HEK293 (cell line): ENCODE measurements at regions of chr21 and their contacts with region 1.

Region 1: GRCh38 chr21:28992526-28993292 is at the start of gene LTN1:
- H3K4me3 ChIP-seq: peak within 1 kb of the TSS; percentile 64
- H3K27ac ChIP-seq: peak within 1 kb of the TSS; percentile 64
- H3K4me1 ChIP-seq: peaks cover 2% of the 10 kb centered on the region; the same call in 1 of the 2 replicates
- CTCF ChIP-seq: no peak

Region 2: GRCh38 chr21:28871388-28872010 is 121.2 kb before region 1 on chr21:
- CTCF ChIA-PET with region 1: no interaction called
- POLR2A ChIA-PET with region 1: no interaction called
- H3K4me3 ChIP-seq: no peak overlapping the region
- H3K27ac ChIP-seq: no peak overlapping the region
- H3K4me1 ChIP-seq: no peaks in the 10 kb centered on the region
- CTCF ChIP-seq: no peak

Region 3: GRCh38 chr21:29018540-29018939 is 25.8 kb after region 1 on chr21:
- CTCF ChIA-PET with region 1: no interaction called
- POLR2A ChIA-PET with region 1: interaction called, 37 read pairs
- H3K4me3 ChIP-seq: peak overlapping the region; percentile 90
- H3K27ac ChIP-seq: peak overlapping the region; percentile 77; the same call in 1 of the 2 replicates
- H3K4me1 ChIP-seq: no peaks in the 10 kb centered on the region
- CTCF ChIP-seq: no peak

Region 4: DNA sequence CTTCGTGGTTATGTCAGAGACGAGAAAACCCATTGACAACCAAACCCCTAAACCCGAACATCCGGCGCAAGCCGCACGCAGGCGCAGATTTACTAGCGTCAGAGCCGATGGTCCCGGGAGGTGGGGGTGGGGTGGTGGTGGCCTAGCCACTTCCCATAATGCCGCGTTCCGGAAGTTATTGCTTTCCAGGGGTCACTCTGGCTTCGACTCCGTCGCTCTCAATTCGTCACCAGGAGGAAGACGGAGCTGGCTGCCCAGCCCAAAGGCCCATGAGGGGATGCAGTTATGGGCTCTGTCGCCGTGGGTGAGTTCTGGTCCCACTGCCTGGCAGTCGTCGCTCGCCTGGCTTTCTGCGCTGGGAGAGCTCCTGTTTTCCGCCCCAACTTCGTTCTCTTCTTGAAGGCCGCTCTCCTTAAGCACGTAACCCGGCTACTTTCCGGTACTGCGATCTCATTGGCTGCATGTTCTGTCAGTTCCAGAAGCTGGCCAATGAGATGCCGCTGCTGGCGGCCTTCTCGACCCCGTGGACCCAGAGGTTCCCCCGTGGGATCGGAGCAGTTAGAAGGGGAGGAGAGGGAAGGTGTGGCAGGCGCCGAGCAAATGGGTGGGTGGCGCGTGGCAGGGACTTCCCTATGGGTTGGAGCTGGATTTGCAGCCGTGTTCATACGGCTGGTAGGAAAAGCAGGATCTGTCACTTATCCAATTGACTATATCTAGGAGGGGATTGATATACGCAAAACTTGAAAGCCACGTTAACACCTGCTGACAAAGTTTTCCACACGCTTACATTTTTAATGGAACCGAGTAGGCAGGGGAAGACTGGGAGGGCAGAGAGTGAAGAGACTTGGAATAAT is 32.0 kb after region 1 on chr21 and contains the start of gene USP16:
- CTCF ChIA-PET with region 1: no interaction called
- POLR2A ChIA-PET with region 1: interaction called, 37 read pairs
- H3K4me3 ChIP-seq: peak within 1 kb of the TSS; percentile 84
- H3K27ac ChIP-seq: peak within 1 kb of the TSS; percentile 89
- H3K4me1 ChIP-seq: peaks cover 5% of the 10 kb centered on the region; the same call in 1 of the 2 replicates
- CTCF ChIP-seq: peak; percentile 51; the same call in 1 of the 2 replicates